WTC11 (cell line): ENCODE measurements at regions of chr6 and their contacts with region 1.

Region 1: DNA sequence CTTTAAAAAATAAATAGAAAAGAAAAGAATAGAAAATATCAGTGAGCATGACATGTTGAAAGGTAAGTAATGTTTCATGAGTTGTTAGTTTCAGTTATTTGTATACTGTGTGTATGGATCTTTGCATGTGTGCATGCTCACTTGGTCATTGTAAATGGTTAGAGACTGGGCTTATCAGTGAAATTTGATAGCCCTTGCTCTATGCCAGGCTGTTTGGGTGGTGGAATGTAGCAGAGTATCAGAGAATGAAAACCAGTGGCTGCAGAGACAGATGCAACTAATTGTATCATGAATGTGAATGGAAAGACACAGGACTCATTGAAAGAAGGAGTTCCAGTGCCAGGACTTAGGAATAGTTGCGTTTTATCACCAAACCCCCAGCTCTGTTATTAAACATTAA is 4.2 kb downstream of the GSTA2 start:
- DNase-seq: no peak
- ATAC-seq: no peak
- H3K4me3 Mint-ChIP-seq: no peak overlapping the region
- H3K27ac Mint-ChIP-seq: no peak overlapping the region
- H3K4me1 Mint-ChIP-seq: peaks cover 7% of the 10 kb centered on the region
- H3K27me3 Mint-ChIP-seq: no peaks in the 10 kb centered on the region
- CTCF ChIP-seq: no peak

Region 2: DNA sequence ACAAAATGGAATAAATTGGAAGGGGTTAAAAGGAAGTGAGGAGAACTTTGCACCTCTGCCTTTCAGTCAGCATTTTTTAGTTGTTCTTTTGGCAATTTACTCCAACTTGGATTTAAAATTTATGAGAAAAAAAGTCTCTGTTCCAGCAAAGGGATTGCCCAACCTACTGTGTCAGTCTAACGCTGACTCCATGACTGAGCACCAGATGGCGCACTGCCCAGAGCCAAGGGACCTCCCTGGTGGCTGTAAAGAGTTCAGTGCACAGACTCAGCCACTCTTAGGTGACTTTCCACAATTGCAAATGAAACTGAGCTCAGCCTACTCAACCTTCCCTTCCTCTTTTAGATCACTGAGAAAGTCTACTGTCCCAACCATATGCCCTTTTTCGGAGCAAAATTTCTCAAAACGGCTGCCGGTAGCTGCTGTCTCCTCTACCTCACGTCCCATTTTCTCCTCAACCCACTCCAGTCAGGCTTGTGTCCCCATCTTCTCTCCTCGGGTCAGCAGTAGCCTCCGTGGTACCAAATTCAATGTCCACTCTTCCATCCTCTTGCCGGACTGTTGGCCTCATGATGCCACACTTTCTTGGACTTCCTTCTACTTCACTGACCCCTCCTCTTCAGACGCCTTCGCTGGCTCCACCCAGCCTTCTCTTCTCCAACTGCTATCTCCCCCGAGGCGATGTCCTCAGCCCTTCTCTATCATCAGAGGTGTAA is 34.5 kb before region 1 on chr6:
- CTCF ChIA-PET with region 1: interaction called, 16 read pairs
- POLR2A ChIA-PET with region 1: no interaction called
- DNase-seq: peak; percentile 75
- ATAC-seq: peak; percentile 99
- H3K4me3 Mint-ChIP-seq: no peak overlapping the region
- H3K27ac Mint-ChIP-seq: no peak overlapping the region
- H3K4me1 Mint-ChIP-seq: peaks cover 36% of the 10 kb centered on the region
- H3K27me3 Mint-ChIP-seq: no peaks in the 10 kb centered on the region
- CTCF ChIP-seq: peak; percentile 58

Region 3: DNA sequence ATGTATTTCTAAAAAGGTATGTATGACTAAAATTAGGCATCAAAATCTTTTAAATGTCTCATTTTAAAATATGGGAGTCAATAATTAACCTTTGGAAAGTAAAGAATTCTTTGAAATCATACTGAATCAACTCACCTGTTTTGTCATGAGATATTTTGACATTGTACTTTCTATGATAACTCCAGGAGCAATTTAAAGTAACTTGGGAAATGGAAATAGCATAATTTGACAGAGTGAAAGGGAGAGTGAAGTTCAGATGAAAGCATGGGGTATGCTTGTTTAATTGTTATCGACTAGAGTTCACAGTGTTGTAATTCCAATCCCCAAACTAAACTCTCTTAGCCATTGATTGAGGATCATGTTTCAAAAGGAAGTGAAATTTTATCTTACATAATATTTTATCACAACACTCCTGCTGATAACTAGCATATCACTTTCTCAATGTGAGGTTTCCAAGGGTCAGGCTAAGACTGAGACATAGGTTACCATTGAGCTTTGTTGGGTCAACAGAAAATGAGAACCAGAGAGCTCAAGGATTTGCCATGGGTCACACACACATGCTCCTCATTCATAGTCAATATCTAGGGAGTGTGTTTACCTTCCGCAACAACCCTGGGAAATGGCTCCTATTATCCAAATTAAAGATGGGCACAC is 42.2 kb after region 1 on chr6:
- CTCF ChIA-PET with region 1: interaction called, 35 read pairs
- POLR2A ChIA-PET with region 1: interaction called, 3 read pairs
- DNase-seq: no peak
- ATAC-seq: no peak
- H3K4me3 Mint-ChIP-seq: no peak overlapping the region
- H3K27ac Mint-ChIP-seq: no peak overlapping the region
- H3K4me1 Mint-ChIP-seq: peaks cover 7% of the 10 kb centered on the region
- H3K27me3 Mint-ChIP-seq: peaks cover 3% of the 10 kb centered on the region; the same call in 1 of the 2 replicates
- CTCF ChIP-seq: no peak